ENCODE measurements at regions of chr12 and their contacts with region 1.

Region 1: DNA sequence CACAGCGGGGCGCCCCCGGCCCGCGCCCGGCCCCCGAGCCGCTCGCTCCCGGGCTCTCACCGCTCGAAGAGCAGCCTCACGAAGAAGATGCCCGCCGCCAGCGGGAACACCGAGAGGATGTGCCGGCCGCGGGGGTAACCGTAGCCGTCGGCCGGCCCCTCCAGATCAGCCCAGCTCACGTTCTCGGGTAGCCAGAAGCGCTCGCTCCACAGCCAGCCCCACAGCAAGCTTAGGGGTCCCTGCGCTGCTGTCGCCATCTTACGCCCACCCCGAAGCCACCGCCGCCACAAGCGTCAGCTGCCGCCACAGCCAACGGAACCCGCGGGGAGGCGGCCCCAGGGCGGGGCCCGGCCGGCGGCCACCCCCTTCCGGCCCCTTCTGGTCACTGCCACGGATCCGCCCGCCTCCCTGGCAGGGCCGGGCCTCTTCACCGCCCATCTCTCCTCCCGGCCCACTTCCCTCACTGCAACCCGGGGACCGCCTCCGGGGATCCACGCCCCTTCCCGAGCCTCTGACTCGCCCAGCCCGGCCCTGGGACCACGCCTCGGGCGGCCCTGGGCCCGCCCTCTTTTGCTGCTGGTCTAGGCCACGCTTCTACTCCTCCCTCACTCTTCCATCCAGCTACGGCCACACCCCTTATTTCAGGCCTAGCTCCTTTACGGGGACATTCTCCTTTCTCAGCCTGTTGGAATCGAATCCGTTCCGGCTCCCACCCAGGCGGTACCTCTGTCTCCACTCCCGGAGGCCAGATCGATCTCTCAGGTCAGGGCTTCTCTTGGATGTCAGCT is at the start of gene CERS5:
- DNase-seq: peak; percentile 97
- ATAC-seq: peak; percentile 98
- H3K4me3 ChIP-seq: peak within 1 kb of the TSS; percentile 75
- H3K27ac ChIP-seq: peak within 1 kb of the TSS; percentile 90
- H3K4me1 ChIP-seq: peaks cover 5% of the 10 kb centered on the region; the same call in 1 of the 2 replicates
- H3K27me3 ChIP-seq: no peaks in the 10 kb centered on the region
- CTCF ChIP-seq: no peak; the same call in 1 of the 2 replicates
- POLR2A ChIP-seq: peak; percentile 93
- RAD21 ChIP-seq: no peak
- total RNA-seq, gene CERS5: 40.3 and 47.5 TPM in 2 replicates

Region 2: DNA sequence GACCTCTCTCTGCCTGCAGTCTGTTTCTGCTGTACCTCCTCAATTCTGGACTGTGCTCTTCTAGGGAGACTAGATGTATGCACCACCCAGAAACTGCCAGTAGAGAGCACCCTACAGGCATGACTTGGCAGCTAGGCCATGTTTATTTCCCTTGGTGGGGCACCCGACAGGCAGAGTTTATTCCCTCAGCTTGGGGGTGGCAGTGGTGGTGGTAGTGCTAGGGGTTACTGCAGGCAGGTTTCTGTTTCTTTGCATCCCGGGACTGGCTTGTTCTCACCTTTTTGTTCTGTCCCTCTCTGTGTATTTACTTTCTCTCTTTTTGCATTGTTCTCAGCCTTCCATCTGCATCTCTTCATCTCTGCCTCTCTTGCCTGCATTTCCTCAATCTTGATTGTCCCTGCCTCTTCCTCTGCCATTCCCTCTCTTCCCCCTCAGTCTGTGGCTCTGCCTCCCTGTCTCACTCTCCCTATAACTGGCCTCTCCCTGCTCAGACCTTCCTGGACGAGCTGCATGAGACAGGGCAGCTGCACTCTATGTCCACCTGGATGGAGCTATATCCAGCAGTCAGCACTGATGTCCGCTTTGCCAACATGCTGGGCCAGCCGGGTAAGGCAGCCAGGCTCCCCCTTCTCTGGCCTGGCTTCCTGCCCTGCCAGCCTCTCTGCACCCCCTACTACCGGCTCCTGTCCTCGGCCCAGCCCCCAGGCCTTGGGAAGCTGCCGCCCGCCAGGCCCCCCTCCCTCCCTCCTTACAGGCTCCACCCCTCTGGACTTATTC is 530.1 kb before region 1 on chr12:
- CTCF ChIA-PET with region 1: no interaction called
- POLR2A ChIA-PET with region 1: no interaction called
- dilution Hi-C with region 1: no loop called
- in situ Hi-C with region 1: no loop called
- intact Hi-C with region 1: no loop called
- DNase-seq: peak; percentile 68
- ATAC-seq: peak; percentile 95
- H3K4me3 ChIP-seq: no peak overlapping the region
- H3K27ac ChIP-seq: peak overlapping the region; percentile 18; the same call in 1 of the 2 replicates
- H3K4me1 ChIP-seq: peaks cover 5% of the 10 kb centered on the region; the same call in 1 of the 2 replicates
- H3K27me3 ChIP-seq: no peaks in the 10 kb centered on the region
- CTCF ChIP-seq: peak; percentile 79
- POLR2A ChIP-seq: no peak
- RAD21 ChIP-seq: peak; percentile 79

Region 3: GRCh38 chr12:50032639-50033581 is 134.3 kb before region 1 on chr12:
- CTCF ChIA-PET with region 1: no interaction called
- POLR2A ChIA-PET with region 1: no interaction called
- dilution Hi-C with region 1: no loop called
- in situ Hi-C with region 1: no loop called
- intact Hi-C with region 1: no loop called
- DNase-seq: no peak
- ATAC-seq: no peak
- H3K4me3 ChIP-seq: no peak overlapping the region
- H3K27ac ChIP-seq: no peak overlapping the region
- H3K4me1 ChIP-seq: no peaks in the 10 kb centered on the region
- H3K27me3 ChIP-seq: peaks cover 7% of the 10 kb centered on the region
- CTCF ChIP-seq: no peak
- POLR2A ChIP-seq: no peak
- RAD21 ChIP-seq: no peak

Region 4: GRCh38 chr12:50084775-50085614 is 82.2 kb before region 1 on chr12 and contains the start of gene SMARCD1:
- CTCF ChIA-PET with region 1: no interaction called
- POLR2A ChIA-PET with region 1: no interaction called
- dilution Hi-C with region 1: no loop called
- in situ Hi-C with region 1: no loop called
- intact Hi-C with region 1: loop called (anchors 5 kb)
- DNase-seq: peak; percentile 91
- ATAC-seq: peak; percentile 92
- H3K4me3 ChIP-seq: peak within 1 kb of the TSS; percentile 63
- H3K27ac ChIP-seq: peak within 1 kb of the TSS; percentile 81
- H3K4me1 ChIP-seq: peaks cover 7% of the 10 kb centered on the region
- H3K27me3 ChIP-seq: no peaks in the 10 kb centered on the region
- CTCF ChIP-seq: peak; percentile 72
- POLR2A ChIP-seq: peak; percentile 49; the same call in 1 of the 2 replicates
- RAD21 ChIP-seq: 0 out of 2 replicates have a peak, but pooled peaks have one; percentile 2
- total RNA-seq, gene SMARCD1: 28.1 TPM in 2 replicates

Region 5: GRCh38 chr12:50458606-50459005 is 291.4 kb after region 1 on chr12:
- CTCF ChIA-PET with region 1: no interaction called
- POLR2A ChIA-PET with region 1: no interaction called
- dilution Hi-C with region 1: no loop called
- in situ Hi-C with region 1: no loop called
- intact Hi-C with region 1: no loop called
- DNase-seq: peak; percentile 47
- ATAC-seq: peak; percentile 37
- H3K4me3 ChIP-seq: no peak overlapping the region
- H3K27ac ChIP-seq: no peak overlapping the region
- H3K4me1 ChIP-seq: no peaks in the 10 kb centered on the region
- H3K27me3 ChIP-seq: no peaks in the 10 kb centered on the region
- CTCF ChIP-seq: no peak
- POLR2A ChIP-seq: no peak
- RAD21 ChIP-seq: no peak

Measured in IMR-90 (cell line).